ENCODE measurements at regions of chr9 and their contacts with region 1.

Region 1: GRCh38 chr9:98010445-98010844 is 27.3 kb downstream of the ANP32B start:
- DNase-seq: no peak
- ATAC-seq: peak; percentile 61
- H3K4me3 ChIP-seq: no peak overlapping the region
- H3K4me3 Mint-ChIP-seq: peak overlapping the region in 5 of 10 donors; percentile 6 to 65 (median 33)
- H3K27ac ChIP-seq: no peak overlapping the region
- H3K27ac Mint-ChIP-seq: peak overlapping the region in 5 of 9 donors; percentile 7 to 74 (median 60)
- H3K4me1 ChIP-seq: no peaks in the 10 kb centered on the region
- H3K4me1 Mint-ChIP-seq: peaks cover 1 to 38% (median 28%) of the 10 kb centered on the region in 7 donors
- H3K27me3 ChIP-seq: no peaks in the 10 kb centered on the region
- H3K27me3 Mint-ChIP-seq: no peaks in the 10 kb centered on the region

Region 2: GRCh38 chr9:97321711-97322504 is 688.5 kb before region 1 on chr9:
- CTCF ChIA-PET with region 1: no interaction called
- POLR2A ChIA-PET with region 1: no interaction called
- intact Hi-C with region 1: no loop called
- DNase-seq: no peak
- ATAC-seq: no peak
- H3K4me3 ChIP-seq: no peak overlapping the region
- H3K4me3 Mint-ChIP-seq: peak overlapping the region in 1 of 10 donors; percentile 18
- H3K27ac ChIP-seq: no peak overlapping the region
- H3K27ac Mint-ChIP-seq: peak overlapping the region in 1 of 9 donors; percentile 26
- H3K4me1 ChIP-seq: no peaks in the 10 kb centered on the region
- H3K4me1 Mint-ChIP-seq: peaks cover 0 to 9% (median 5%) of the 10 kb centered on the region in 7 donors
- H3K27me3 ChIP-seq: no peaks in the 10 kb centered on the region
- H3K27me3 Mint-ChIP-seq: no peaks in the 10 kb centered on the region

Region 3: DNA sequence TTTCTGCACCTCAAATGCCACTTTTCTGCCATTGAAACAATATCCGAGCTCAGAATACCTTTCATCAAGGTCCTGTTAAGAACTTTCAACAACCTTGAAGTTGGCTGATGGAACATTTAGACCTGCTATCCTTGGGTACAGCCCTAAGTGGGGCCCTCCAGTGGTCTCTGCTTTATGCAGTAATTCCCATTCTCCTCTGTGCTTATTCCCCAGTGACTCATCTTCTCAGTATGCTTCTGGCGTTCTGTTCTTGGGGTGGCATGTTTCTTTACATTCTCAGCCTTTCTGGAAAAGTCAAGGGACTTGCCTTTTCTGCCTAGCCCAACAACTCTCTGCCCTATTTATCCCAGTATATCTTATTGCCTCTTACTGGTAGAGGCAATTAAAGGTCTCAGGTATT is 20.2 kb before region 1 on chr9:
- CTCF ChIA-PET with region 1: interaction called, 3 read pairs
- POLR2A ChIA-PET with region 1: interaction called, 4 read pairs
- intact Hi-C with region 1: loop called (anchors 2 kb)
- DNase-seq: no peak
- ATAC-seq: no peak
- H3K4me3 ChIP-seq: no peak overlapping the region
- H3K4me3 Mint-ChIP-seq: peak overlapping the region in 8 of 10 donors; percentile 1 to 92 (median 32)
- H3K27ac ChIP-seq: no peak overlapping the region
- H3K27ac Mint-ChIP-seq: peak overlapping the region; percentile 7 to 75 (median 50)
- H3K4me1 ChIP-seq: peaks cover 46 to 80% of the 10 kb centered on the region in 2 donors
- H3K4me1 Mint-ChIP-seq: peaks cover 63 to 94% (median 91%) of the 10 kb centered on the region in 7 donors
- H3K27me3 ChIP-seq: no peaks in the 10 kb centered on the region
- H3K27me3 Mint-ChIP-seq: no peaks in the 10 kb centered on the region

Region 4: GRCh38 chr9:98074115-98074990 is 63.9 kb after region 1 on chr9:
- CTCF ChIA-PET with region 1: no interaction called
- POLR2A ChIA-PET with region 1: no interaction called
- intact Hi-C with region 1: no loop called
- DNase-seq: peak; percentile 46 to 78 (median 63)
- ATAC-seq: peak; percentile 47
- H3K4me3 ChIP-seq: no peak overlapping the region
- H3K4me3 Mint-ChIP-seq: peak overlapping the region; percentile 26 to 79 (median 64)
- H3K27ac ChIP-seq: peak overlapping the region; percentile 81
- H3K27ac Mint-ChIP-seq: peak overlapping the region; percentile 83 to 98 (median 94)
- H3K4me1 ChIP-seq: peaks cover 27 to 28% of the 10 kb centered on the region in 2 donors
- H3K4me1 Mint-ChIP-seq: peaks cover 0 to 55% (median 46%) of the 10 kb centered on the region in 7 donors
- H3K27me3 ChIP-seq: no peaks in the 10 kb centered on the region
- H3K27me3 Mint-ChIP-seq: no peaks in the 10 kb centered on the region